Mammary epithelial cell (primary cell): ENCODE measurements at regions of chr17 and their contacts with region 1.

Region 1: DNA sequence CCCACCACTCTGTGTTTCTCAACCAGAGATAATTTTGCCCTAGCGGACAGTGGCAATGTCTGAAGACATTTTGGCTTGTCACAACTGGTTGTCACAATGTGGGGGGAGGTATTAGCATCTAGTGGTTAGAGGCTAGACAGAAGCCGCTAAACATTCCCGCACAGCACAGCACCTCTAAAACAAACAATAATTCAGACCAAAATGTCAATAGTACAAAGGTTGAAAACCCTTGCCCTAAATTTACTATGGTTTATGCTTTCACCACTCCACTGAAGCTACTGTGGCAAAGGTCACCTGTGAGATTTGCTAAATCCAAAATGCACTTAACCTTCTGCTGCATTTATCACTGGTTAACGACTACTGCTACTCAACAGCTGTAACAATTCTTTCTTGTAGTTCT is 14.1 kb downstream of the NUP88 start:
- DNase-seq: no peak
- H3K4me3 ChIP-seq: no peak overlapping the region
- H3K27ac ChIP-seq: no peak overlapping the region
- H3K4me1 ChIP-seq: no peaks in the 10 kb centered on the region
- H3K27me3 ChIP-seq: no peaks in the 10 kb centered on the region
- CTCF ChIP-seq: no peak

Region 2: GRCh38 chr17:5373112-5373511 is 32.3 kb before region 1 on chr17:
- CTCF ChIA-PET with region 1: no interaction called
- dilution Hi-C with region 1: loop called (anchors 5 kb)
- in situ Hi-C with region 1: no loop called
- intact Hi-C with region 1: no loop called
- DNase-seq: no peak
- H3K4me3 ChIP-seq: no peak overlapping the region
- H3K27ac ChIP-seq: no peak overlapping the region
- H3K4me1 ChIP-seq: no peaks in the 10 kb centered on the region
- H3K27me3 ChIP-seq: no peaks in the 10 kb centered on the region
- CTCF ChIP-seq: no peak